Aorta (tissue), 5 donors: ENCODE measurements at regions of chr11 and their contacts with region 1.

Region 1: DNA sequence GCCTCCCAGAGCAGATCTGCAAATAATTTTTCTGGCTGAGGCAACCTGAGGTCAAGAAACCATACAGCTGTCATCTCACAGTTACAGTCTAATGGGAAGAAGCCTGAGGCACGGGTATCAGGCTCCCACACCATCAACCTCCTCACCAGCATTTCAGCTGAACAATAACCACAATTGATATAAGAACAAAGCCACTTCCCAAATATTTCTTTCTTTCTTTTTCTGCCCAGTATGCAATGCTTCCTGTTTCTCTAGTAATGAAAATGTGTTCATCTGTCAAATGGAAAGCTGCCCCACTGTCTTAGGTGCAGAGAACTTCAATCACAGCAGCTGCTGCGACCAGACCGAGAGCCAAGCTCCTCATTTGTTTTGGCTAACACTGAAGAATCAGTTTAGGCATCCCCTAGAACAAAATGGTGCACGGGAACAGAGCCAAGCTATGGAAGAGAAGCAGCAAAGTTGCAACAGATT is 108.4 kb downstream of the BLID start:
- DNase-seq: peak in 1 of 2 donors; percentile 49
- ATAC-seq: no peak
- H3K4me3 ChIP-seq: no peak overlapping the region
- H3K27ac ChIP-seq: peak overlapping the region in 1 of 2 donors; percentile 25
- H3K4me1 ChIP-seq: no peaks in the 10 kb centered on the region
- H3K27me3 ChIP-seq: no peaks in the 10 kb centered on the region

Region 2: DNA sequence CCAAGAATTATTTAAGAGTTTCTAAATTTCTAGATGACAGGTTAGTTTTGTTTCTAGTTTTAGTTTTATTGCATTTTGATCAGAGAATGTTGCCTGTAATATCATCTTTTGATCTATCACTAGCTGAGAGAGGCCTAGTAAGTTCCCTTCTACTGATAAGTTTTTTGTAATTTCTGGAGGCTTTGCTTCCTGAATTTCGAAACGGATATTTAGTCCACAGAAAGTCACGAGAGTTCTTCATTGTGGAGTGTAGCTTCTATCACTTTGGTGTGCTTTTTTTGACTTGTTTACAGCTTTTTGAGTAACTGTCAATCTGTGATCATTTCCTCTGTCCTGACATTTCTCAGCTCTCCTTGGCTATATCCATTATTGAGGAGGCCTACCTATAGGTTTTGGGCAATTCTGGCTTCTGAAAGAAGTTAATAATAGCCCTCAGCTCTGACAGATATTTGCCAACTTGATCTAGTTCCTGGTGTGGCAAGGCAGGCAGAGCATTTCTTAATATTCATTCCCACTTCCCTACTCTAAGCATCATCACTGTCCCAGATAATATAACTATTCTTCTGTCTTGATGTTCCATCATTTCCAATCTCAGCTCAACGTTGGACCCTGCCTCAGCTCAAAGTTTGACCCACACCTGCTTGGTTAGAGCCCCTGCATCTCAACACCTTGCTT is 62.9 kb before region 1 on chr11:
- intact Hi-C with region 1: loop called in 1 of 2 experiments (anchors 10 kb)
- DNase-seq: no peak
- ATAC-seq: no peak
- H3K4me3 ChIP-seq: no peak overlapping the region
- H3K27ac ChIP-seq: no peak overlapping the region
- H3K4me1 ChIP-seq: no peaks in the 10 kb centered on the region
- H3K27me3 ChIP-seq: no peaks in the 10 kb centered on the region